Lower leg skin (tissue), 4 donors: ENCODE measurements at regions of chr15 and their contacts with region 1.

Region 1: DNA sequence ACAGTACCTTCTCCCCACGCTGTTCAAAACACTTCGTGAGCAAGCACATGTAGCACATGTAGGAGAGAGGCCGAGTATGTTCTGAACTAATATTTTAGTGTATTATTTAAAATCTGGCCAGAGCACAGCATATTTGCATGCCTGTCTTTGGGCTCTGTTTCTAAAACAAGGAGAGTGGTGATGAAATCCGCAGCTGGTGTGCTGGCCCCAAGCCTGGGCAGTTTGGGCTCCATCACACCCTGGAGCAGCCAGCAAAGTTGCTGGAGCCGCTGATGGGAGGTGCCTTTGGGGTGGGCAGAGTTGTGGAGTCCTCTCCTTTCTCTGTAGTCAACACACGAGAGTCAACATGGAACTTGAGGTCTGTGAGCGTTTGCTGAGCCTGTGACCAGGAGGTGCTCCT is 116.6 kb downstream of the SLCO3A1 start:
- DNase-seq: peak in 1 of 2 donors; percentile 91
- H3K4me3 ChIP-seq: no peak overlapping the region
- CTCF ChIP-seq: no peak
- POLR2A ChIP-seq: no peak

Region 2: GRCh38 chr15:91852741-91853510 is 117.2 kb before region 1 on chr15:
- intact Hi-C with region 1: loop called (anchors 10 kb)
- DNase-seq: peak; percentile 79 to 95
- H3K4me3 ChIP-seq: peak overlapping the region; percentile 68
- CTCF ChIP-seq: peak in 1 of 3 donors; percentile 9
- POLR2A ChIP-seq: no peak